ENCODE measurements at regions of chr3 and their contacts with region 1.

Region 1: GRCh38 chr3:53938645-53939044 is 47.0 kb upstream of the SELENOK start:
- DNase-seq: peak; percentile 45
- ATAC-seq: peak; percentile 49
- H3K4me3 Mint-ChIP-seq: no peak overlapping the region
- H3K27ac Mint-ChIP-seq: no peak overlapping the region
- H3K4me1 Mint-ChIP-seq: no peaks in the 10 kb centered on the region
- H3K27me3 Mint-ChIP-seq: peaks cover 27% of the 10 kb centered on the region

Region 2: DNA sequence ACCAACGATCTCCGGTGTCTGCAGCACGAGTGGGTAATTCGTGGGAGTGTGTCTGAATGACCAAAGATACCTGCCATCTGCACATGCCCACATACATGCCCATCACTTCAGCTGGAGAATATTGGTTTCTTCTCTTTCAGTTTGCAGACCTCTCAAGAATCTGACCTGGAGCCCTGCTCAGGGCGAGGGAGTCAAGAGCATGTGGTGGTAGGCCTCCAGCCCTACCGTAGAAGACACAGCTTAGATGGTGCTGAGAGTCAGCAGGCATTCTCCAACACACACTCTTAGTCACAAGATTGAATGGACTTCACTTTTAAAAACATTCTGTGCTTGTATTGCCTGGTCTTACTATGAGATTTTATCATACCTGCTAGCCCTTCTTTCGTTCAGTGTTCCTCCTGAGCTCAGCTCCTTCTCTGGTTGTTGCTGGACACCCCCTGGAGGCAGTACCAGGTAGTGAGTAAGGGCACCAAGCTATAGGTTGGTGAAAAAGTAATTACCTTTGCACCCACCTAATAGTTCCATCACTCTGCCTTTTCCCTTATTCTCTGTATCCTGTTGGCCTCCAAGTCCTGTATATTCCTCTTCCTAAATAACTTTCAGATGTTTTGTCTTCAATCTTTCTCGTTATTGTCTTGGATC is 435.7 kb after region 1 on chr3:
- CTCF ChIA-PET with region 1: interaction called, 13 read pairs
- POLR2A ChIA-PET with region 1: interaction called, 3 read pairs
- intact Hi-C with region 1: loop called in 1 of 2 experiments (anchors 1 kb)
- DNase-seq: peak; percentile 38
- ATAC-seq: no peak
- H3K4me3 Mint-ChIP-seq: no peak overlapping the region
- H3K27ac Mint-ChIP-seq: no peak overlapping the region
- H3K4me1 Mint-ChIP-seq: no peaks in the 10 kb centered on the region
- H3K27me3 Mint-ChIP-seq: no peaks in the 10 kb centered on the region

Region 3: GRCh38 chr3:54557541-54558419 is 619.1 kb after region 1 on chr3:
- CTCF ChIA-PET with region 1: no interaction called
- POLR2A ChIA-PET with region 1: no interaction called
- intact Hi-C with region 1: no loop called
- DNase-seq: no peak
- ATAC-seq: no peak
- H3K4me3 Mint-ChIP-seq: no peak overlapping the region
- H3K27ac Mint-ChIP-seq: no peak overlapping the region
- H3K4me1 Mint-ChIP-seq: no peaks in the 10 kb centered on the region
- H3K27me3 Mint-ChIP-seq: no peaks in the 10 kb centered on the region

Region 4: DNA sequence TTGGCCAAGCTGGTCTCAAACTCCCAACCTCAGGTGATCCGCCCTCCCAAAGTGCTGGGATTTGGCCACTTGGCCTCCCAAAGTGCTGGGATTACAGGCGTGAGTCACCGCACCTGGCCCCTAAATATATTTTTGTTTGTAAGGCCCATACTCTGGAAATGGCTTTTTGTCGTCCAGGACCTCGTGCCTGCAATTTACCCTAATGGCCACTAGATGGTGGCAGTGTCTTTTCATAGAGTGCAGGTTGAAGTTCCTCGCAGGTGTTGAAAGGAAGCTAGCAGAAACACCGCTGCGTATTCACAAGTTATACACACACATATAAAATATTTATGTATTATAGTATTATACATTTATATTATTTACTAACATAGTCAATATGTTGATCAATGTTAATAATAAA is 892.0 kb after region 1 on chr3:
- CTCF ChIA-PET with region 1: no interaction called
- POLR2A ChIA-PET with region 1: no interaction called
- intact Hi-C with region 1: loop called in 1 of 2 experiments (anchors 10 kb)
- DNase-seq: peak; percentile 35
- ATAC-seq: no peak
- H3K4me3 Mint-ChIP-seq: no peak overlapping the region
- H3K27ac Mint-ChIP-seq: no peak overlapping the region
- H3K4me1 Mint-ChIP-seq: no peaks in the 10 kb centered on the region
- H3K27me3 Mint-ChIP-seq: no peaks in the 10 kb centered on the region

Measured in activated CD4-positive, alpha-beta T cell treated with anti-CD3 and anti-CD28 coated beads for 36 hours (primary cell).